ENCODE measurements at regions of chr3 and their contacts with region 1.

Region 1: DNA sequence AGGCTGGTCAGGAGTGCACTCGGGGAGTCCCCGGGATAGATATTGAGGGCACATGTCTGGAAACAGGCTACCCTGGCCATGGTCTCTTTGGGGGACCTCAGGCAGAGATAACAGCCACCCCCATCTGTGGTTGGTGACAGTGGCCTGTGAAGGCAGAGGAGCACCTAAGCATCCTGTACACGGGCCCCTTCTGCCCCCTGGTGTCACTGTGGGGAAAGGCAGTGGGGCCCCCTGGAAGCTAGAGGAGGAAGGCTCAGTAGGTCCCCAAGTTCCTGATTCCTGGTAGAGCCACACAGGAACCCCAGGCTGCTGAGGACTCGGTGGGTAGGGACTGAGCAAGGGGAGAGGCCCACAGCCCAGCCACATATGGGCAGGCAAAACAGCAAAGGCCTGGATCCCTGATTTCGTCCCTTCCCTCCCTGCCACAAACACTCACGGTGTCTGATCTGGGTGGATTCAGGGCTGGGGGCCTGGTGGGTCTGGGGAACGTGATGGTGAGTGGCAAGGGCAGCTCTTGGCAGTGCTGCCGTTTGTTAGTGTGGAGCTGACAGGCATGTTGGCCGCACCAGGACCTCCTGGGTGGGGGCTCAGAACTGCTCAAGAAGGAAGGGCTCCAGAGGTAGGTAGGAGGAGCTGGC is 14.1 kb upstream of the CXCR6 start:
- DNase-seq: peak; percentile 23 to 60 (median 52)
- H3K4me3 ChIP-seq: no peak overlapping the region
- H3K27ac ChIP-seq: no peak overlapping the region
- H3K4me1 ChIP-seq: no peaks in the 10 kb centered on the region
- H3K27me3 ChIP-seq: no peaks in the 10 kb centered on the region

Region 2: GRCh38 chr3:45753095-45753494 is 176.1 kb before region 1 on chr3:
- CTCF ChIA-PET with region 1: interaction called, 11 read pairs
- POLR2A ChIA-PET with region 1: no interaction called
- DNase-seq: no peak
- H3K4me3 ChIP-seq: no peak overlapping the region
- H3K27ac ChIP-seq: no peak overlapping the region
- H3K4me1 ChIP-seq: no peaks in the 10 kb centered on the region
- H3K27me3 ChIP-seq: no peaks in the 10 kb centered on the region

Region 3: GRCh38 chr3:45760878-45761711 is 168.1 kb before region 1 on chr3:
- CTCF ChIA-PET with region 1: interaction called, 61 read pairs
- POLR2A ChIA-PET with region 1: interaction called, 3 read pairs
- DNase-seq: peak; percentile 47 to 69 (median 65)
- H3K4me3 ChIP-seq: no peak overlapping the region
- H3K27ac ChIP-seq: no peak overlapping the region
- H3K4me1 ChIP-seq: no peaks in the 10 kb centered on the region
- H3K27me3 ChIP-seq: peaks cover 0 to 3% (median 0%) of the 10 kb centered on the region in 5 experiments

Region 4: GRCh38 chr3:45841757-45842491 is 87.2 kb before region 1 on chr3 and contains the start of gene LZTFL1:
- CTCF ChIA-PET with region 1: interaction called, 10 read pairs
- POLR2A ChIA-PET with region 1: no interaction called
- DNase-seq: peak; percentile 98 to 99 (median 99)
- H3K4me3 ChIP-seq: peak within 1 kb of the TSS; percentile 46 to 89 (median 87)
- H3K27ac ChIP-seq: peak within 1 kb of the TSS; percentile 89 to 97
- H3K4me1 ChIP-seq: peaks cover 6 to 15% (median 15%) of the 10 kb centered on the region in 4 experiments
- H3K27me3 ChIP-seq: peaks cover 0 to 2% (median 0%) of the 10 kb centered on the region in 5 experiments

Region 5: GRCh38 chr3:46029953-46030543 is 100.9 kb after region 1 on chr3:
- CTCF ChIA-PET with region 1: no interaction called
- POLR2A ChIA-PET with region 1: no interaction called
- DNase-seq: no peak
- H3K4me3 ChIP-seq: no peak overlapping the region
- H3K27ac ChIP-seq: no peak overlapping the region
- H3K4me1 ChIP-seq: no peaks in the 10 kb centered on the region
- H3K27me3 ChIP-seq: no peaks in the 10 kb centered on the region